CD4-positive, alpha-beta T cell (primary cell): ENCODE measurements at regions of chr1 and their contacts with region 1.

Region 1: DNA sequence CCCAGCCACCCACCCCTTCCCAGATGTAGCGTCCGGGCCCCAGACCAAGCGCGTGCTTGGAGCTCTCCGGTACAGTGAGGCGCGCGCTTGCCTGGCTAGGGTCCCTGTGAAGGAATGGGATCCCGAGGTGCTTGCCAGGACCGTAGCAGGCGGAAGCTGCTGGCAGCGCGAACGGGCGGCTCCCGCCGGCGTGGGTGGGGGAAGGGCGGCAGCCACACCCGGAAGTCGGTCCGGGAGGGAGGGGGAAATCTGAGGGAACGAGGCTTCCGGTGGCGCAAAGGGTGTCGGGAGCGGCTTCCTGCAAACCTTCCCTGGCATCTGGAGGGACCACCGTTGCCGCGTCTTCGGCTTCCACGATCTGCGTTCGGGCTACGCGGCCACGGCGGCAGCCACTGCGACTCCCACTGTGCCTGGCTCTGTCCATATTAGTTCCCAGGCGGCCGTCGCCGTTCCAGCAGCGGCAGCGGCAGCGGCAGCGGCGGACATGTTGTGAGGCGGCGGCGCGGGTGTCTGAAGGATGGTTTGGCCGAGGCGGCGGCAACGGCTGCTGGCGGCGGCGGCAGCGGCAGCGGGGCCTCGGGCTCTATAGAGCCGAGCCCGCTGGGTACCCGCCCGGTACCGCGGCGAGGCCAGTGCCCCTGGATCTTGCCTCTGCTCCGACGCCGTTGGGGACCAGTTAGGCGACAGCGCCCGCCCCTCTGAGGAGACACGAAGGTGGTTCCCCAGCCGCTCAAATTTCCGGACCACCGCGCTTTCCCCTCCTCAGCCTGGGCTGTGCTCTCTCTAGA is at the start of gene DR1:
- DNase-seq: peak; percentile 85 to 94 (median 87)
- ATAC-seq: peak; percentile 79
- H3K4me3 ChIP-seq: peak within 1 kb of the TSS; percentile 90
- H3K4me3 Mint-ChIP-seq: peak within 1 kb of the TSS; percentile 99
- H3K27ac ChIP-seq: peak within 1 kb of the TSS; percentile 87 to 94
- H3K27ac Mint-ChIP-seq: peak within 1 kb of the TSS; percentile 96
- H3K4me1 ChIP-seq: peaks cover 9% of the 10 kb centered on the region
- H3K4me1 Mint-ChIP-seq: peaks cover 61% of the 10 kb centered on the region
- H3K27me3 ChIP-seq: no peaks in the 10 kb centered on the region
- H3K27me3 Mint-ChIP-seq: no peaks in the 10 kb centered on the region
- CTCF ChIP-seq: no peak
- total RNA-seq, gene DR1: 51.4 to 54.4 TPM

Region 2: DNA sequence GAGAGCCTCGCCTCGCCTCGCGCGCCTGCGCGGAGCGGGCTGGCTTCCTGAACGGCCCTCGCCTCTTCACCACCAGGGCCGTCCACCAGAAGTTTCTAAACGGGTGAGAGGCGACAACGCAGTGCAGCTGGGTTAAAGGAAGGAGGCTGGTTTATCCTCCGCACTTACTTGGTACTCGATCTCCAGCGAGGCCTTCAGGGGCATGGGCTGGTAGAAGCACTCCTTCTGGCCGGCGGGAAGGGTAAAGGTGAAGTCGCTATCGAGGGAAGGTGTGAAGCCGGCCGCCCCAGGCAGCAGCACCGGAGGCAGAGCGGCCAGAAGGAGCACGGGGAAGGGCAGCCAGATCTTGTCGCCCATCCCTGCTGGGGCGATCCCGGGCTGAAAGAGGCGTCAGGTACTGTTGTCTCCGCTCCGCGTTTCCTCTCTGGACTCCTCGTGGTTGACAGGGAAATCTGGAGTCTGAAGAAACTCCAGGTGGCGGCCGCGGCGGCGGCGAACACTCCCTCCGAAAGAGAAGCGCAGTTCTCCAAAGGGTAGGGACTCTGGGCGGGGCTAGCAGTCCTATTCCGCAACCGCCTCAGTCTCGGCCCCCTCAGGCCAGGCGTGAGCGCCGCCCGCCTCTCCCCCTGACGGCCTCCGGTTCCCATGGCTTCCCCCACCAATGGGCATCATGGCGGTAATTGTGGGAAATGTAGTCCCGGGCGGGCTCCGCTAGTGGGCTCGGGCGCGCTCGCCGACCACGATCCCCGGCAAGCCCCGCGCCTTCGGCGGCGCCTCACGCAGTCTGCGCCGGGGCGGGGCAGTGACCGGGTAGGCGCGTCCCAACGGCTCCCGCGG is 165.7 kb before region 1 on chr1 and contains the start of gene TMED5:
- CTCF ChIA-PET with region 1: no interaction called
- POLR2A ChIA-PET with region 1: interaction called, 9 read pairs
- intact Hi-C with region 1: loop called (anchors 2 to 5 kb)
- DNase-seq: peak; percentile 88 to 99 (median 94)
- ATAC-seq: peak; percentile 78
- H3K4me3 ChIP-seq: peak within 1 kb of the TSS; percentile 91
- H3K4me3 Mint-ChIP-seq: peak within 1 kb of the TSS; percentile 93
- H3K27ac ChIP-seq: peak within 1 kb of the TSS; percentile 97 to 98
- H3K27ac Mint-ChIP-seq: peak within 1 kb of the TSS; percentile 95
- H3K4me1 ChIP-seq: peaks cover 25% of the 10 kb centered on the region
- H3K4me1 Mint-ChIP-seq: peaks cover 52% of the 10 kb centered on the region
- H3K27me3 ChIP-seq: no peaks in the 10 kb centered on the region
- H3K27me3 Mint-ChIP-seq: no peaks in the 10 kb centered on the region
- CTCF ChIP-seq: peak; percentile 14
- total RNA-seq, gene TMED5: 42.3 to 43.2 TPM

Region 3: DNA sequence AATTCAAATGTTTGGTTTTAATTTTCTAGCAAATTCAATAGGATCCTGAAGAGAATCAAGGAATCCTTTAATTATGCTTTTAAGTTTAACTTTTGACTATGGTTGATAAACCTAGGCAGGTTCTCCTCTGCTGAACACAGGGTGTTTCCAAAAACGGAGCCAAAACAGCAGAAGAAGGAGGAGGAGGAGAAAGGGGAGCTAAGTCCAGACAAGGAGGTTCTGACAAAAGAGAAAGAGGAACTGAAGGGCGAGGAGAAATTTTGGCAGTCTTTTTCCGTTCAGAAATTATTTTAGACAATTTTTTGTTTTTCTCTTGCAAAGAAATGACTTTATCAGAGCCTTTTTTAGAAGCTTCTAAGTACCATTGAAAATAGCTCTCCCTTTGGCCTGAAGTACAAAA is 68.9 kb after region 1 on chr1:
- CTCF ChIA-PET with region 1: no interaction called
- POLR2A ChIA-PET with region 1: no interaction called
- intact Hi-C with region 1: no loop called
- DNase-seq: no peak
- ATAC-seq: no peak
- H3K4me3 ChIP-seq: no peak overlapping the region
- H3K4me3 Mint-ChIP-seq: no peak overlapping the region
- H3K27ac ChIP-seq: no peak overlapping the region
- H3K27ac Mint-ChIP-seq: no peak overlapping the region
- H3K4me1 ChIP-seq: no peaks in the 10 kb centered on the region
- H3K4me1 Mint-ChIP-seq: no peaks in the 10 kb centered on the region
- H3K27me3 ChIP-seq: no peaks in the 10 kb centered on the region
- H3K27me3 Mint-ChIP-seq: peaks cover 8% of the 10 kb centered on the region
- CTCF ChIP-seq: no peak

Region 4: GRCh38 chr1:93426181-93426580 is 80.4 kb after region 1 on chr1:
- CTCF ChIA-PET with region 1: no interaction called
- POLR2A ChIA-PET with region 1: no interaction called
- intact Hi-C with region 1: no loop called
- DNase-seq: no peak
- ATAC-seq: no peak
- H3K4me3 ChIP-seq: no peak overlapping the region
- H3K4me3 Mint-ChIP-seq: no peak overlapping the region
- H3K27ac ChIP-seq: no peak overlapping the region
- H3K27ac Mint-ChIP-seq: no peak overlapping the region
- H3K4me1 ChIP-seq: no peaks in the 10 kb centered on the region
- H3K4me1 Mint-ChIP-seq: no peaks in the 10 kb centered on the region
- H3K27me3 ChIP-seq: peaks cover 0 to 4% of the 10 kb centered on the region in 2 experiments
- H3K27me3 Mint-ChIP-seq: no peaks in the 10 kb centered on the region
- CTCF ChIP-seq: no peak

Region 5: DNA sequence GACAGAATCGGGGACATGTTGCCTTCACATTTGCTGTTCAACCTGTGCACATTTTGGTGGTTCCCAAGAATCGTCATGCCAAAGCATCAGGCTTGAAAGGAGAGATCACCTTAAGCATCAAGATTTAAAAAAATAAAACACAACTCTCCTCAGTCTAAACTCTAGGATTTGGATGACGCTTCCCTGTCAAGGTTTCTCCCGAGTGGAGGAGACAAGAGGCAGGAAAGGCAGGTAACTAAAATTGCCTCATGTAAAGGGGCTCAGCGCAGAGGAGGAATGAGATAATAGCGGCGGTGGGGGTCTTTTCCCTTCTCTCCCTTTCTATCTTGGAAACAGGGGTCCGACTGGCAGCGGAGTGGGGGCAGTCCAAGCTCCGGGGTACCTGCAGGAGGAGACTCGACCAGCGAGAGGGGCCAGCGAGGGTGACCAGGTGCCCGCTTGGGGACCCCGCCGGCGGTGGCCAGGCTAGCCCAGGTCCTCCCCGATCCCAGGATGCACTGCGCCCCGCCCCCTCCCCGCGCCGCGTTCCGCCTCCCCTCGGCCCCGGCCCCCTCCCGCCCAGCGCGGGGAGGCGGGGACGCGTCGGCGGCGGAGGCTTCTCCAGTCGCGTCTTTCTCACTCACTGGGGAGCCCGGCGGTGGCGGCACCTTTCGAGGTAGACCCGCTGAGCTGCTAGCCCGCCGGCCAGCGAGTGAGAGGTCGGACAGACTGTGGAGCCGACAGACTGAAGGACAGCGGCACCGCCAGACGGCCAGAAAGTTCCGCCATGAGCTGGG is 101.9 kb after region 1 on chr1 and contains the start of gene FNBP1L:
- CTCF ChIA-PET with region 1: no interaction called
- POLR2A ChIA-PET with region 1: interaction called, 8 read pairs
- intact Hi-C with region 1: loop called in 1 of 2 experiments (anchors 5 kb)
- DNase-seq: peak; percentile 20 to 79 (median 54)
- ATAC-seq: peak; percentile 82
- H3K4me3 ChIP-seq: peak within 1 kb of the TSS; percentile 65
- H3K4me3 Mint-ChIP-seq: peak within 1 kb of the TSS; percentile 97
- H3K27ac ChIP-seq: no peak within 1 kb of the TSS
- H3K27ac Mint-ChIP-seq: peak within 1 kb of the TSS; percentile 59
- H3K4me1 ChIP-seq: peaks cover 20% of the 10 kb centered on the region
- H3K4me1 Mint-ChIP-seq: peaks cover 27% of the 10 kb centered on the region
- H3K27me3 ChIP-seq: peaks cover 16 to 37% of the 10 kb centered on the region in 2 experiments
- H3K27me3 Mint-ChIP-seq: peaks cover 42% of the 10 kb centered on the region
- CTCF ChIP-seq: no peak
- total RNA-seq, gene FNBP1L: 1.1 TPM

Region 6: DNA sequence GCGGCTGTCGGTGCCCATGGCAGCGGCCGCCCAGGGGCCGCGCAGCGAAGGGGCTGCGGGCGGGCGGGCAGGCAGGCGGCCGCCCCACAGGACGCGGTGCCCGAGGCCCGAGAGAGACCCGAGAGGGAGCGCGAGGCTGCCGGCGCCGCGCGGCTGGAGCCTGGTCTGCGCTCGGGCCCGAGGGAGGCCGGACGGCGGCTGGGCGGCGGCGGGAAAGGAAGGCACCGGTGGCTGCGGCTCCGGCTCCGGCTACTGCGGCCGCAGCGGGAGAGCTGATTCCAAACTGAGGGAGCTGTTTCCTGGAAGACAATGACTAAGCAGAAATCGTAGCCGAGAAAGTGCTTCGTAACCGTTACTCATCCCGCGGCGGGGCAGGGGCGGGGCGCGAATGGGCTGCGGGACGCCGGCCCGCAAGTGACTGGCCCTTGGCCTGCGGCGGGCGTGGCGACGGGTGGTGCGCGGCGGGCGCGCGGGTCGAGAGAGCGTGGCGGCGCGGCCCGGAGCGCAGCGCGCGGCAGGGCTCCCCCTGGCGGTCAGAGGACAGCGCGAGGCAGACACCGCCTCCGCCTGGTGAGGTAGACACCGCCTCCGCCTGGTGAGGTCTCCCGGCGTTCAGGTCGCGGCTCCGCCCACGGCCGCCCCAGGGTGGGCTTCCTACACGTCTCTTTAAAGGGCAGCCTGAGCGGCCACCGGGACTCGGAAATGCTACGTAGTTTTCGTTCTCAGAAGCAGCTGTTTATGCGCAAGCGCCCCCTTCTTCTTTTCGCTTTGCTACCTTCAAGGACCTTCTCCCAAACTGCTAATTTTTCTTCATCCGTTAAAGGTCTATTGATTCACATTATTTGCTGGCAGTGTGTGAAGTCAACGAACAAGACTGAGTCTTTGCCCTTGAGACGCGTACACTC is 563.6 kb after region 1 on chr1 and contains the start of gene GCLM:
- CTCF ChIA-PET with region 1: no interaction called
- POLR2A ChIA-PET with region 1: interaction called, 11 read pairs
- intact Hi-C with region 1: loop called in 1 of 2 experiments (anchors 5 kb)
- DNase-seq: peak; percentile 78 to 95 (median 86)
- ATAC-seq: peak; percentile 89
- H3K4me3 ChIP-seq: peak within 1 kb of the TSS; percentile 68
- H3K4me3 Mint-ChIP-seq: peak within 1 kb of the TSS; percentile 96
- H3K27ac ChIP-seq: peak within 1 kb of the TSS; percentile 25 to 73
- H3K27ac Mint-ChIP-seq: peak within 1 kb of the TSS; percentile 83
- H3K4me1 ChIP-seq: peaks cover 20% of the 10 kb centered on the region
- H3K4me1 Mint-ChIP-seq: peaks cover 44% of the 10 kb centered on the region
- H3K27me3 ChIP-seq: no peaks in the 10 kb centered on the region
- H3K27me3 Mint-ChIP-seq: no peaks in the 10 kb centered on the region
- CTCF ChIP-seq: peak; percentile 78
- total RNA-seq, gene GCLM: 6.1 to 6.8 TPM

Region 7: DNA sequence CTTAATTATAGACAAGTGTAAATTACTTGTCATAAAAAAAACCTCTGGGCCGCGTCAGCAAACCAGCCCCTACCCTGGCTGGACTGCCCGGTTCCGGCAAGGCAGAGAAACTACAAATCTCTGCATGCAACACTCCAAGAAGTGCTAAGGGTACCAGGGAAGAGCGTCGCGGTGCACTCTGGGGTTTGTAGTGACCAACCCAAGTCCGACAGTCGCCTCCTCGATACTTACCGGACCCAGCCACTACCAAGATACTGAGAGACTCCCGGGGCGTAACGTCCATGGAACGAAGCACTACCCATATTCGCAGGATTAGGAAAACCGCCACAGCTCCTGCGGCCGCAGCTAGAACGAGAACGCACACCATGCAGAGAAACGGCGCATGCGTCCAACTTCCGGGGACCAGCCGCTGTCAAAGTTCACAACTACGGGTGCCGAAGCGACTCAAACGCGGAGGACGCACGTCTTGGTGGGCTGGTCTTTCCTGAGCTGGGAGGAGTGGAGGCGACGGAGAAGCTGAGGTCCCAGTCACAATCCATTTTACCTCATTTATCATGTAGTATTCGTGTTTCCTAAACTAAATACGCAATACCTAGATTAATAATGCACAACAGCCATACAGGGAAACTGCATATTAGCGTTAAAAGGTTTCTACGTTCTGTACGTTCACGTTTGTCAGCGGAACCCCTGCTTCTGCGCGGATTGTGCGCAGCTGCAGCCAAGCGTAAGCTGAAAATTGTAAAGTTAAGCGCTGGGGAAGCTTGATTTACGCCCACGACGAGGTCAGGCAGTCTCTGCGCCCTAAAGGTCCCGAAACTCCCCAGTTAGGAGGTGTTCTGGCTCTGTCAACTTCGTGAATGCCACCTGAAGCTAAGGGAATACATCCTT is 1726.9 kb after region 1 on chr1 and contains the start of gene ALG14:
- CTCF ChIA-PET with region 1: no interaction called
- POLR2A ChIA-PET with region 1: no interaction called
- intact Hi-C with region 1: loop called in 1 of 2 experiments (anchors 5 kb)
- DNase-seq: peak; percentile 87 to 97 (median 90)
- ATAC-seq: peak; percentile 90
- H3K4me3 ChIP-seq: peak within 1 kb of the TSS; percentile 77
- H3K4me3 Mint-ChIP-seq: peak within 1 kb of the TSS; percentile 98
- H3K27ac ChIP-seq: peak within 1 kb of the TSS; percentile 73 to 85
- H3K27ac Mint-ChIP-seq: peak within 1 kb of the TSS; percentile 95
- H3K4me1 ChIP-seq: peaks cover 13% of the 10 kb centered on the region
- H3K4me1 Mint-ChIP-seq: peaks cover 20% of the 10 kb centered on the region
- H3K27me3 ChIP-seq: peaks cover 0 to 6% of the 10 kb centered on the region in 2 experiments
- H3K27me3 Mint-ChIP-seq: peaks cover 4% of the 10 kb centered on the region
- CTCF ChIP-seq: no peak
- total RNA-seq, gene ALG14: 0.08 to 0.52 TPM